ENCODE measurements at regions of chr11 and their contacts with region 1.

Region 1: GRCh38 chr11:61041755-61042518 is 60.4 kb upstream of the CD5 start:
- DNase-seq: peak; percentile 72 to 95 (median 90)
- ATAC-seq: peak; percentile 96
- H3K4me3 ChIP-seq: peak overlapping the region; percentile 27
- H3K4me3 Mint-ChIP-seq: peak overlapping the region; percentile 83
- H3K27ac ChIP-seq: peak overlapping the region; percentile 90 to 93
- H3K27ac Mint-ChIP-seq: peak overlapping the region; percentile 98
- H3K4me1 ChIP-seq: peaks cover 56% of the 10 kb centered on the region
- H3K4me1 Mint-ChIP-seq: peaks cover 62% of the 10 kb centered on the region
- H3K27me3 ChIP-seq: no peaks in the 10 kb centered on the region
- H3K27me3 Mint-ChIP-seq: no peaks in the 10 kb centered on the region
- CTCF ChIP-seq: no peak

Region 2: GRCh38 chr11:60855726-60856633 is 186.0 kb before region 1 on chr11 and contains the start of gene PTGDR2:
- CTCF ChIA-PET with region 1: no interaction called
- POLR2A ChIA-PET with region 1: no interaction called
- intact Hi-C with region 1: no loop called
- DNase-seq: no peak
- ATAC-seq: peak; percentile 44
- H3K4me3 ChIP-seq: peak within 1 kb of the TSS; percentile 7
- H3K4me3 Mint-ChIP-seq: peak within 1 kb of the TSS; percentile 48
- H3K27ac ChIP-seq: no peak within 1 kb of the TSS
- H3K27ac Mint-ChIP-seq: peak within 1 kb of the TSS; percentile 32
- H3K4me1 ChIP-seq: peaks cover 11% of the 10 kb centered on the region
- H3K4me1 Mint-ChIP-seq: peaks cover 20% of the 10 kb centered on the region
- H3K27me3 ChIP-seq: no peaks in the 10 kb centered on the region
- H3K27me3 Mint-ChIP-seq: no peaks in the 10 kb centered on the region
- CTCF ChIP-seq: no peak
- total RNA-seq, gene PTGDR2: 0.36 TPM

Region 3: DNA sequence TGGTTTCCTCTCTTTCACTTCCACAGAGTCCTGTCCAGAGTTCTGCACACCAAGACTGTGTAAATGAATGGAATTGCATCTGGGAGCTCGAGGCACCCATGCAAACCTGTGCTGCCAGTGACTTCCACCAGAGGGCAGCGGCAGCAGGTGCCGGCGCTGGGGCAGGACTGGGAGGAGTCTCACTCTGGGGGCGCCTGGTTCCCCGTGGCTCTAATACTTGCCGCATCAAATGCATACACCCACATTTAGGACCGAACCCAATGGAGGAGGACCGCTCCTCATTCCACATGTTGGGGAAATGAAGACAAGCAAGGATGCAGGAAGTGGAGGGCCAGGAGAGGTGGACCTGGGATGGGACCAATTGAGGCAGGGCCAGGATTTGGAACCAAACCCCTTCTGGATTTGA is 71.6 kb before region 1 on chr11:
- CTCF ChIA-PET with region 1: interaction called, 9 read pairs
- POLR2A ChIA-PET with region 1: no interaction called
- intact Hi-C with region 1: loop called in 1 of 2 experiments (anchors 2 kb)
- DNase-seq: peak; percentile 71 to 90 (median 80)
- ATAC-seq: peak; percentile 71
- H3K4me3 ChIP-seq: peak overlapping the region; percentile 96
- H3K4me3 Mint-ChIP-seq: peak overlapping the region; percentile 90
- H3K27ac ChIP-seq: peak overlapping the region; percentile 83 to 93
- H3K27ac Mint-ChIP-seq: peak overlapping the region; percentile 94
- H3K4me1 ChIP-seq: peaks cover 29% of the 10 kb centered on the region
- H3K4me1 Mint-ChIP-seq: peaks cover 25% of the 10 kb centered on the region
- H3K27me3 ChIP-seq: no peaks in the 10 kb centered on the region
- H3K27me3 Mint-ChIP-seq: no peaks in the 10 kb centered on the region
- CTCF ChIP-seq: peak; percentile 97

Region 4: DNA sequence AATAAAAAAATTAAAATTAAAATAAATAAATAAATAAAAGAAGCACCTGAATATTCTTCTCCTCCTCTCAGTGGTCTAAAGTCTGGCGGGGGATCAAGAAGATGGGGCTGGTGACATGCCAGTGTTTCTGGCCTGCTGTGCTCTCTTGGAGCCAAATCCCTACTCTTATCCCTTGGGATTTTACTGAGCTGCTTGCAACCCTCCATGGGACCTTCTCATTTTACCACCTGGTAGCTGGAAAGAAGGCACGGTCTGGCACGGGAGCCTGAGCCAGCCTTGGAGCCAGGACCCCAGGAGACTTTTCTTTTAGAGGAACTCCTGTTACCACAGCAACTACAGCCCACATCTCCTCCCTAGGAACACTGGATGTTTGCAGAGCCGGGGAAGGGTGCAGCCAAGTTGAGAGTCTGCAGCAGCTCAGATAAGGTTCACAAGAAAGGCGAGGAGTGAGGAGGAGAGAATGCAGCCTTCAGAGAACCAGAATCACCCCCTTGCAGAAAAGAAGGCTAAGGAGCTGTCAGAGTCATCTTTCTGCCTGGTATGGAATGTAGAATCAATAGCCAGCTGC is 49.0 kb before region 1 on chr11:
- CTCF ChIA-PET with region 1: no interaction called
- POLR2A ChIA-PET with region 1: interaction called, 89 read pairs
- intact Hi-C with region 1: no loop called
- DNase-seq: peak in 1 of 14 experiments; percentile 15
- ATAC-seq: no peak
- H3K4me3 ChIP-seq: no peak overlapping the region
- H3K4me3 Mint-ChIP-seq: peak overlapping the region; percentile 78
- H3K27ac ChIP-seq: peak overlapping the region; percentile 22 to 61
- H3K27ac Mint-ChIP-seq: peak overlapping the region; percentile 87
- H3K4me1 ChIP-seq: peaks cover 89% of the 10 kb centered on the region
- H3K4me1 Mint-ChIP-seq: peaks cover 83% of the 10 kb centered on the region
- H3K27me3 ChIP-seq: no peaks in the 10 kb centered on the region
- H3K27me3 Mint-ChIP-seq: no peaks in the 10 kb centered on the region
- CTCF ChIP-seq: no peak

Region 5: GRCh38 chr11:61028272-61028761 is 13.6 kb before region 1 on chr11:
- CTCF ChIA-PET with region 1: interaction called, 4 read pairs
- POLR2A ChIA-PET with region 1: interaction called, 307 read pairs
- intact Hi-C with region 1: loop called in 1 of 2 experiments (anchors 1 kb)
- DNase-seq: peak in 13 of 14 experiments; percentile 43 to 86 (median 69)
- ATAC-seq: peak; percentile 17
- H3K4me3 ChIP-seq: peak overlapping the region; percentile 15
- H3K4me3 Mint-ChIP-seq: peak overlapping the region; percentile 84
- H3K27ac ChIP-seq: peak overlapping the region; percentile 45 to 84
- H3K27ac Mint-ChIP-seq: peak overlapping the region; percentile 99
- H3K4me1 ChIP-seq: peaks cover 63% of the 10 kb centered on the region
- H3K4me1 Mint-ChIP-seq: peaks cover 84% of the 10 kb centered on the region
- H3K27me3 ChIP-seq: no peaks in the 10 kb centered on the region
- H3K27me3 Mint-ChIP-seq: no peaks in the 10 kb centered on the region
- CTCF ChIP-seq: no peak

Region 6: DNA sequence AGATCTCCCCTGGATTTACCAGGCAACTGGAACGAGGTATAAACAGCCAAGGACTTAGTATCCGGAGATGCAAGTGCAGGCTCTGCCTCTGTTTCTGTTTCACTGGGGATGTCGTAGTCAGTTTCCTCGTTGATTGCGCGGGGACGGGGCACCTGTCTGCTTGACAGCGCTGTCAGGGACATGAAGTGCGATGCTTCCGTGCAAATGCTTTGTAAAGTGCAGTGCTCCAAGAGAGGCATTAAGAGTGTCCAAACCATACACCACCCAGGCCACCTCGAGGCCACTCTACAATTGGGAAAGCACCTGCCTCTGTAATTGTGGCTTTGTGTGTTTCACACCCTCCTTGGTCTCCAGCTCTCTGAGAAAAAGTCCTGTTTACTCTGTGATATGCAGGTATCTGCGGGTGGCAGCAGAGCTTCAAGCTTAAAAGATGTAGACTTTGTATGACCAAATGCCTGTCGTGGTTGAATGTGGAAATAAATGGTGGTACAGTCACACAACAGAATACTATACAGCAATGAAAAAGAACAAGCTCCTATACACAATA is 41.7 kb after region 1 on chr11:
- CTCF ChIA-PET with region 1: interaction called, 13 read pairs
- POLR2A ChIA-PET with region 1: interaction called, 237 read pairs
- intact Hi-C with region 1: loop called in 1 of 2 experiments (anchors 5 kb)
- DNase-seq: peak; percentile 56 to 92 (median 68)
- ATAC-seq: peak; percentile 67
- H3K4me3 ChIP-seq: peak overlapping the region; percentile 53
- H3K4me3 Mint-ChIP-seq: peak overlapping the region; percentile 89
- H3K27ac ChIP-seq: peak overlapping the region; percentile 90 to 94
- H3K27ac Mint-ChIP-seq: peak overlapping the region; percentile 98
- H3K4me1 ChIP-seq: peaks cover 54% of the 10 kb centered on the region
- H3K4me1 Mint-ChIP-seq: peaks cover 66% of the 10 kb centered on the region
- H3K27me3 ChIP-seq: no peaks in the 10 kb centered on the region
- H3K27me3 Mint-ChIP-seq: no peaks in the 10 kb centered on the region
- CTCF ChIP-seq: peak; percentile 36

Region 7: DNA sequence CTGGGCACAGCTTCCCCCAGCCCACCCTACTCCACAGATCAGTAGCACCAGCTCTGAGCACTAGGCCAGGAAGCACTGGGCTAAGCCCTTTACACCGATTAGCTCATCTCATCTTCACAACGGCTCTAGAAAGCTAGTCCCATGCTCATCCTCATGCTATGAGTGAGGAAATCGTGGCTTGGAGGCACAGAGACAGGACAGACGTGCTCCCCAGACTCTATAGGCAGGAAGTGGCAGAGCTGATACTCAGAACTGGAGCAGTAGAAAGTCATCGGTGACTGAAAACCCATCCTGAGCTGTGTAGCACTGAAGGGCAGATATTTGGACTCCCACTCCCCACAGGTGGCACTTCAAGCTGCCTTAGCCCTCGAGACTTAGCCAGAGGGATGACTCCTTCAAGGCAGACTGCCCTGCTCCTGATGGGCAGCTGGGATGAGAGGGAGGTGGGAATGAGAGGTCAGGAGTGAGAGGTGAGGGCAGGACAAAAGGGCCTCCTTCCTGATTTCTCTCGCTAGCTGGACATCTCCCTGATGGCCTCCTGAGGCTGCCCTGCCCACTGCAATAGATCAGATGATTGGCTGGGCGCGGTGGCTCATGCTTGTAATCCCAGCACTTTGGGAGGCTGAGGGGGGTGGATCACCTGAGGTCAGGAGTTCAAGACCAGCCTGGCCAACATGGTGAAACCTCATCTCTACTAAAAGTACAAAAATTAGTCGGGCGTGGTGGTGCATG is 70.0 kb after region 1 on chr11:
- CTCF ChIA-PET with region 1: no interaction called
- POLR2A ChIA-PET with region 1: interaction called, 41 read pairs
- intact Hi-C with region 1: loop called in 1 of 2 experiments (anchors 5 kb)
- DNase-seq: peak in 13 of 14 experiments; percentile 28 to 87 (median 52)
- ATAC-seq: peak; percentile 78
- H3K4me3 ChIP-seq: peak overlapping the region; percentile 24
- H3K4me3 Mint-ChIP-seq: peak overlapping the region; percentile 83
- H3K27ac ChIP-seq: peak overlapping the region; percentile 67 to 71
- H3K27ac Mint-ChIP-seq: no peak overlapping the region
- H3K4me1 ChIP-seq: peaks cover 100% of the 10 kb centered on the region
- H3K4me1 Mint-ChIP-seq: peaks cover 100% of the 10 kb centered on the region
- H3K27me3 ChIP-seq: no peaks in the 10 kb centered on the region
- H3K27me3 Mint-ChIP-seq: no peaks in the 10 kb centered on the region
- CTCF ChIP-seq: no peak

Region 8: DNA sequence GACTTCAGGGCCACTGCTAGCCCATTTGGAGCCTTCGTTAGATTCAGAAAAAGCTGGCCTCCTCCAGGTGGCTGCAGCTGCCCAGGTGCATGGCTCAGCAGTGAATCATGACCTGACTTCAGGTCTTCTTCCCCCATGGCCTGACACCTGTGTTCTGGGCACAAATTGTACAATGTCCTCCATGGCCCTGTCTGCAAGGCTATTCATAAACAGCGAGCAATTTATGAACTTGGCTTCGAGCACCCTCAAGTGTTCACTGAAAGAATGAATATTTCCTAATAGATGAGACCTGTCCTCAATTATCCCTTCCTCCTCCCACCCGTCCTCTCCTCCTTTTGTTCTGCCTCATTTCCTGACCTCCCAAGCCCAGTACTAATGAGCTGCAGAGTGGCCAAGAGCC is 131.5 kb after region 1 on chr11:
- CTCF ChIA-PET with region 1: no interaction called
- POLR2A ChIA-PET with region 1: no interaction called
- intact Hi-C with region 1: no loop called
- DNase-seq: peak in 1 of 14 experiments; percentile 7
- ATAC-seq: no peak
- H3K4me3 ChIP-seq: no peak overlapping the region
- H3K4me3 Mint-ChIP-seq: no peak overlapping the region
- H3K27ac ChIP-seq: no peak overlapping the region
- H3K27ac Mint-ChIP-seq: no peak overlapping the region
- H3K4me1 ChIP-seq: peaks cover 16% of the 10 kb centered on the region
- H3K4me1 Mint-ChIP-seq: peaks cover 23% of the 10 kb centered on the region
- H3K27me3 ChIP-seq: no peaks in the 10 kb centered on the region
- H3K27me3 Mint-ChIP-seq: no peaks in the 10 kb centered on the region
- CTCF ChIP-seq: no peak

Measured in CD4-positive, alpha-beta T cell (primary cell).